Adrenal gland (tissue), 19 donors: ENCODE measurements at regions of chr5 and their contacts with region 1.

Region 1: DNA sequence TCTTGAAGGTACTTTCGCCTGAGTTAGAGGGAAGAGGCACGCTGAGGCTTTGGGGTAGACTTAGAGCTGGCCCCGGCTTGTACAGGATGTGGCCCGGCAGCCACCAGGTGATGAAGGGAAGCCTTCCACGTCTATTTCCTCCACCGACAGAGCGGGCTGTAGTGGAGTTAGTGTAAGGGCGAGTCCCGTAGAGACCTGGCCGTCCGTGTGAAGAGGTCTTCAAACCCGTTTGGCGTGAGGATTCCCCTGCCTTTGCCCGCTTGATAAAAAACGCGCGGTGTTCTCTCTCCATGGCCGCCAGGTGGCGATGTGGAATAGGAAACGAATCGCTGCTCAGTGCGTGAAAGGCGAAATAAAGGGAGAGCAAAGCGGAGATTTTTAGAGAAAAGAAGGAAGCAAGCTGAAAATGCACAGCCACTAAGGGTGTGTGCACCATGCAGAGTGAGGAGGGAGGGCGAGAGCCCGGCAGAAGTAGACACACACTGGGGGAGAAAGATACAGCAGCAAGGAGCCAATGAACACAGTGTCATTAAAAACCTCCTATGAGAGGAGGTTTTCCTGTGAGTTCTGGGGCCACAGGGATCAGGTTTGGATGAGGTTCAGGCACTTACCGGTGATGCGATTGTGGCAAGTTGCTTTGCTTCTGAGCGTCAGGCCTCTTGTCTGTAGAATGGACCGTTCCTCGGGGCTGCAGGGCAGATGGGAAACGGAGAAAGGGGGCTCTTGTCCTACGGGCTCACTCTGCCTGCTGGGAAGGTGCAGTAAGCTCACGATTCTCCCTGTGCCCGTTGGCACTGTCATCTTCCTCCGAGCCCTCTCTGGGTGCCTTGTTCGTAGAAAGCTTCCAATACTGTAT is 34.2 kb downstream of the STC2 start:
- DNase-seq: peak; percentile 68 to 88 (median 76)
- H3K4me3 ChIP-seq: no peak overlapping the region
- H3K27ac ChIP-seq: no peak overlapping the region
- H3K4me1 ChIP-seq: peaks cover 0 to 4% of the 10 kb centered on the region in 2 donors
- H3K27me3 ChIP-seq: peaks cover 13% of the 10 kb centered on the region
- CTCF ChIP-seq: peak; percentile 85 to 95 (median 90)
- POLR2A ChIP-seq: no peak

Region 2: DNA sequence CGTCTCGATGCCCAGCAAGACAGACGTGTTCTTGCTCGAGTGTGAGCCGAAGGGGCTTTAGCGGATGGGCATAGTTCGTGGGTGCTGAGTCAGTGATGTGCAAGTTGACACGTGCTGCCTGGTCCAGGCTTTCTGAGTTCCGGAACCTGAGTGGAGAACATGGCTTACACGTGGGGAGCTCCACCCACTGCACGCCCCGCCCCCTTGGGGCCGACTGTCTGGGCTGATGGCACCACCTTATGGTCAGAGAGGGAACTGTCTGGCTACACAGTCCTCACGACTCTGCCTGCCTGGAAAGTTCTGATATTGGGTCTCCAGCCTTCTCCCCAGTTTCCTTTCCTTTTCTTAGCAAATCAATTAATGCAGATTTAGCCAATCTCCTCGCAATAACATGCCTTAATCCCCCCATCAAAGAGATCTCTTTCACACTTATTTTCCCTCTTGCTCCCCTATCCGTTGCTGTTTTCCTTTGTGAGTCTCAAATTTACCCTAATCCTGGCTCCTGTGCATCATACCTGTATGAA is 38.0 kb after region 1 on chr5:
- intact Hi-C with region 1: loop called (anchors 2 kb)
- DNase-seq: peak; percentile 79 to 94 (median 89)
- H3K4me3 ChIP-seq: no peak overlapping the region
- H3K27ac ChIP-seq: no peak overlapping the region
- H3K4me1 ChIP-seq: peaks cover 7 to 21% of the 10 kb centered on the region in 2 donors
- H3K27me3 ChIP-seq: peaks cover 39% of the 10 kb centered on the region
- CTCF ChIP-seq: peak; percentile 84 to 98 (median 96)
- POLR2A ChIP-seq: no peak

Region 3: DNA sequence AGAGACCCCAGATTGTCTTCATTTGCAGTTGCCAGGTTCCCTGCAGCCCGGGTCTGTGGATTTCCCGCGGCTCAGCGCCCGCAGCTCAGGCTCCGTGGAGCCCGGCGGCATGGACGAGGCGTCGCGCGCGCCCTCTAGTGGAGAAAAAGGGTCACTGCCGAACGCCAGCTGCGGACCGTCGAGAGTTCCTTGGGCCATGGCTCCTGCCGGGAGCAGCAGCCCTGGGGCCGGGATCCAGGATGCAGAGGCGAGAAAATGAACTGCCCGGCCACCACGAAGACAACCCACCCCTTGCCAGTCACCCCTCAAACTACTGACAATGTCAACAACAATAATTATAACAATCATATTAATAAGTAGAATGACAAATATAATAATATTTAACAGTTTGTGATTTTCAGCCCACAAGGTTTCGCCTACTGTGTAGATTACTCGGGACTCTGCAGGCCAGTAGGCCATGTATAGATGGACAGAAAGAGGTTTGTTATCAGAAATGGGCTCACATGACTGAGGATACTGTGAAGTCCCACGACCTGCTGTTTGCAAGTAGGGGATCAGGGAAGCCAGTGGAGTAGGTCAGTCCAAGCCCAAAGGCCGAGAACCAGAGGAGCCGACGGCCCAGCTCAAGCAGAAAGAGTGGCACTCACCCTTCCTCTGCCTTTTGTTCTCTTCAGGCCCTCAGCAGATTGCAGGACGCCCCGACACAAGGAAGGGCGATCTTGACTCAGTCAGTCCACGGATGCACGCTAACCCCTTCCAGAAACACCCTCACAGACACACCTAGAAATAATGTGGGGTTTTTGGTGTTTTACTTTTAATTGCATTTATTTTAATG is 279.3 kb after region 1 on chr5:
- intact Hi-C with region 1: loop called (anchors 5 to 10 kb)
- DNase-seq: peak; percentile 57 to 85 (median 73)
- H3K4me3 ChIP-seq: no peak overlapping the region
- H3K27ac ChIP-seq: no peak overlapping the region
- H3K4me1 ChIP-seq: no peaks in the 10 kb centered on the region
- H3K27me3 ChIP-seq: no peaks in the 10 kb centered on the region
- CTCF ChIP-seq: peak; percentile 81 to 98 (median 92)
- POLR2A ChIP-seq: no peak